ENCODE measurements at regions of chr4 and their contacts with region 1.

Region 1: GRCh38 chr4:184745831-184746795 is 12.2 kb upstream of the CENPU start:
- DNase-seq: peak; percentile 86
- ATAC-seq: peak; percentile 91
- H3K4me3 Mint-ChIP-seq: no peak overlapping the region
- H3K27ac Mint-ChIP-seq: no peak overlapping the region
- H3K4me1 Mint-ChIP-seq: peaks cover 10% of the 10 kb centered on the region
- H3K27me3 Mint-ChIP-seq: no peaks in the 10 kb centered on the region
- CTCF ChIP-seq: peak; percentile 83

Region 2: DNA sequence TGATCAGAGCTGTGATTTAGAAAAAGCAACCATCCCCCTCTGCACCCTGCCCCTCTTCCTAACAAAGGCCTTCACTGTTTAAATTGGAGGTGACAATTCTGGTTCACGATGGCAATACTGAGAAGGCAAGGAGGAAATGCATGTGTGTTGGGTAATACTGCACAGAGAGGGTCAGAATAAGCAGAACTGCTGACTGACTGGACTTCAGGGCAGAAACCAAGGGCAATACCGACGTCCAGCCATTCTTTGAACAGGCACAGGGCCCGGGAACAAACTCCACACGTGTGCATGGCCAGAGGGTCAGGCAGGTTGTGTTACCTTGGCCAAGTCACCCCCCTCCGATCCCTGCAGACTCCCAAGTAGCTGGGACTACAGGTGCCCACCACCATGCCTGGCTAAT is 73.7 kb after region 1 on chr4:
- CTCF ChIA-PET with region 1: interaction called, 13 read pairs
- POLR2A ChIA-PET with region 1: interaction called, 3 read pairs
- intact Hi-C with region 1: loop called (anchors 5 kb)
- DNase-seq: no peak
- ATAC-seq: no peak
- H3K4me3 Mint-ChIP-seq: no peak overlapping the region
- H3K27ac Mint-ChIP-seq: no peak overlapping the region
- H3K4me1 Mint-ChIP-seq: peaks cover 66% of the 10 kb centered on the region
- H3K27me3 Mint-ChIP-seq: no peaks in the 10 kb centered on the region
- CTCF ChIP-seq: no peak

Region 3: GRCh38 chr4:184825896-184826690 is 80.0 kb after region 1 on chr4 and contains the start of gene ACSL1:
- CTCF ChIA-PET with region 1: interaction called, 13 read pairs
- POLR2A ChIA-PET with region 1: no interaction called
- intact Hi-C with region 1: loop called (anchors 5 kb)
- DNase-seq: peak; percentile 81
- ATAC-seq: peak; percentile 87
- H3K4me3 Mint-ChIP-seq: peak within 1 kb of the TSS; percentile 84
- H3K27ac Mint-ChIP-seq: peak within 1 kb of the TSS; percentile 85
- H3K4me1 Mint-ChIP-seq: peaks cover 44% of the 10 kb centered on the region
- H3K27me3 Mint-ChIP-seq: no peaks in the 10 kb centered on the region
- CTCF ChIP-seq: no peak
- total RNA-seq, gene ACSL1: 12.8 to 13.1 TPM

Region 4: DNA sequence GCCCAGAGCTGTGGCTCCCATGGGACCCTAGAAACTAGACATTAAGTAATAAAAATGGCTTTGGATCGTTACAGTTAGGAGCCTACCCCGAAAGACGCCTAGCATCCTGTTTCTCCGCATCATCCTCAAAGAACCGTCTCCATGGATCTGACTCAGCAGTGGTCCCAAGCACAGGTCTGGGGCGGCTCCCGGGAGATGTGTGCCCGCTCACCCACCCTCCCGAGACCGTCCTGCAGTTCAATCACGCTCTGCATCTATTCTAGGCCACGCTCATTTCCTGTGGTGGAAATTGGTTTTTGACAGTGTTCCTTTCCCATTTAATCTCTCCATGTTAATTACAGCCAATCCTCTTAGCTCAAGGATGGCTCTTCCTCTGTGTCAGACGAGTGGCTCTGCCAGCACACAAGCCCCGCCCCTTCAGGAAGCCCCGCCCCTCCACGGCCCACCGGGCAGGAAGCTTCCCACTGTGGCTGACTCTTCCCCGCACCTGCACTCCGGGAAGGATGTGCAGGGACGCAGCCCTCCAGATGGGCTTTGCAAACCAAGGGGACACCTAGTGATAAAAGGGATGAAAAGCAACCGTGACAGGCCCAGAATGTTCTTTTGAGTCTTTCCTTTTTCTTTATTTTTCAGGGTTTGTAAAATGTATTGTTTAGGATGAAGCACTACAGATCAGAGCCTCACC is 237.7 kb after region 1 on chr4:
- CTCF ChIA-PET with region 1: interaction called, 8 read pairs
- POLR2A ChIA-PET with region 1: no interaction called
- intact Hi-C with region 1: loop called (anchors 10 kb)
- DNase-seq: peak; percentile 62
- ATAC-seq: peak; percentile 89
- H3K4me3 Mint-ChIP-seq: no peak overlapping the region
- H3K27ac Mint-ChIP-seq: no peak overlapping the region
- H3K4me1 Mint-ChIP-seq: no peaks in the 10 kb centered on the region
- H3K27me3 Mint-ChIP-seq: no peaks in the 10 kb centered on the region
- CTCF ChIP-seq: no peak

Region 5: DNA sequence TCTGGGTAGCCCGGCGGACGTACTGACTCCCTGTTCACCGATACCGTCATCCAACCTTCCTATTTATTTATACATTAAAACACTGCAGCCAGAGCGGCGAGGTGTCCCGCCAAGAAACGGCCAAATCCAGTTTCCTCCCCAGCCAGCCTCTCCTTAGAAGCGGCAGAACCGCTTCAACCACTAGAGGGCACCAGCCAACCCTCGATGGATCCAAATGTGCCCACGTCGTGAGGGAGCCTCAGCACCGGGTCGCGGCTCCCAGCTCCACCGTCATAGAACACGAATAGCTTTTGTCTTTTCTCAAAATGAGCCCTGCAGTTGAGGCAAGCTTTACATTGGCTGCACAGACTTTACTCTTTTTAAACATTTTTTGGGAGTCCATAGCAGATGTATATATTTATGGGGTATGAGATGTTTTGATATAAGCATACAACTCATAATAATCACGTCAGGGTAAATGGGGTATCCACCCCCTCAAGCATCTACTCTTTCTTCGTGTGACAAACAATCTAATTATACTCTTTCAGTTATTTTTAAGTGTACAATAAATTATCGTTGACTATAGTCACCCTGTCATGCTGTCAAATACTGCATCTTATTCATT is 259.2 kb after region 1 on chr4:
- CTCF ChIA-PET with region 1: interaction called, 11 read pairs
- POLR2A ChIA-PET with region 1: no interaction called
- intact Hi-C with region 1: no loop called
- DNase-seq: peak; percentile 92
- ATAC-seq: peak; percentile 97
- H3K4me3 Mint-ChIP-seq: peak overlapping the region; percentile 1
- H3K27ac Mint-ChIP-seq: no peak overlapping the region
- H3K4me1 Mint-ChIP-seq: peaks cover 3% of the 10 kb centered on the region
- H3K27me3 Mint-ChIP-seq: peaks cover 39% of the 10 kb centered on the region
- CTCF ChIP-seq: peak; percentile 87

Region 6: GRCh38 chr4:185011408-185011807 is 265.3 kb after region 1 on chr4:
- CTCF ChIA-PET with region 1: interaction called, 11 read pairs
- POLR2A ChIA-PET with region 1: no interaction called
- intact Hi-C with region 1: no loop called
- DNase-seq: peak; percentile 30
- ATAC-seq: no peak
- H3K4me3 Mint-ChIP-seq: no peak overlapping the region
- H3K27ac Mint-ChIP-seq: no peak overlapping the region
- H3K4me1 Mint-ChIP-seq: peaks cover 2% of the 10 kb centered on the region
- H3K27me3 Mint-ChIP-seq: peaks cover 65% of the 10 kb centered on the region
- CTCF ChIP-seq: peak; percentile 35

Measured in activated CD8-positive, alpha-beta T cell treated with anti-CD3 and anti-CD28 coated beads for 36 hours (primary cell).